Panc1 (cell line): ENCODE measurements at regions of chrX and their contacts with region 1.

Region 1: GRCh38 chrX:74343343-74344279 is 39.6 kb downstream of the ZCCHC13 start:
- DNase-seq: peak; percentile 90
- ATAC-seq: peak; percentile 99
- H3K4me3 ChIP-seq: no peak overlapping the region
- H3K27ac ChIP-seq: peak overlapping the region; percentile 87
- H3K4me1 ChIP-seq: peaks cover 14% of the 10 kb centered on the region
- H3K27me3 ChIP-seq: no peaks in the 10 kb centered on the region
- CTCF ChIP-seq: peak; percentile 81

Region 2: DNA sequence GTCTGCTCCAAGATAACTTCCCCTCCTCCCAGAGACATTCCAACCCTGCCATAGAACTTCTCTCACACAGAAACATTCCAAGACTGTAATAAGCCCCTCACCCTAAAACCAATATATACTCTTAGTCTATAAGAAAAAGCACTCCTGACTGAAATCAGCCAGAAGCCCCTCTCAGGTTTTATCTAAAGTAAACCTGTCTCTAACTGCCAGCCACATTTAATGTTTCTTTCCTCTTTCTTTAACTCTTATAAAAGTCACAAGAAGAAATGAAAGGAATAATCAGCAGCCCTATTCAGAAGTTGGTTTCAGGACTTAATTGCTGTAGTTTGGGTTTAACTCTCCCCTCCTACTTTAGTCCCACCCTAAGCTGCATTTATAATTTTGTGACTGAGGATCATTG is 204.7 kb before region 1 on chrX:
- CTCF ChIA-PET with region 1: no interaction called
- POLR2A ChIA-PET with region 1: no interaction called
- in situ Hi-C with region 1: no loop called
- intact Hi-C with region 1: no loop called
- DNase-seq: no peak
- ATAC-seq: no peak
- H3K4me3 ChIP-seq: no peak overlapping the region
- H3K27ac ChIP-seq: no peak overlapping the region
- H3K4me1 ChIP-seq: no peaks in the 10 kb centered on the region
- H3K27me3 ChIP-seq: no peaks in the 10 kb centered on the region
- CTCF ChIP-seq: no peak

Region 3: DNA sequence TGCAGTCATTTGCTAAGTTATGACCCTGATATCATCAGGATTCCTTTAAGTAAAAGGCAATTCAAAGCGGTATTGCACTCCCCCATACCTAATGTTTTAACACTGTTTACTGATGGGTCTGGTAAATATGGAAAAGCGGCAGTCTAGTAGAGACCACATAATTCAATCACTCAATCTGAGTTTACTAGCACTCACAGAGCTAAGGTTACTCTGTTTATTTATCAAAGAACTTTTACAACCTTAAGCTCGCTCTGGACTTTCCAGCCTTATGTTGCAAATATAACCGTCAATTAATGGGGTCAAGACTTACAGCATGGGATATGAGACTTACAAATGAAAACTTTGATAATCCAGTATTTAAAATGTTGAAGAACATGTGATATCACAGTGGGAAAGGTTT is 164.1 kb before region 1 on chrX:
- CTCF ChIA-PET with region 1: interaction called, 11 read pairs
- POLR2A ChIA-PET with region 1: no interaction called
- in situ Hi-C with region 1: no loop called
- intact Hi-C with region 1: no loop called
- DNase-seq: no peak
- ATAC-seq: peak; percentile 79
- H3K4me3 ChIP-seq: no peak overlapping the region
- H3K27ac ChIP-seq: peak overlapping the region; percentile 98
- H3K4me1 ChIP-seq: peaks cover 34% of the 10 kb centered on the region
- H3K27me3 ChIP-seq: no peaks in the 10 kb centered on the region
- CTCF ChIP-seq: no peak

Region 4: GRCh38 chrX:74291964-74292807 is 51.4 kb before region 1 on chrX:
- CTCF ChIA-PET with region 1: no interaction called
- POLR2A ChIA-PET with region 1: no interaction called
- in situ Hi-C with region 1: no loop called
- intact Hi-C with region 1: loop called (anchors 2 kb)
- DNase-seq: peak; percentile 72
- ATAC-seq: peak; percentile 92
- H3K4me3 ChIP-seq: peak overlapping the region; percentile 89 to 98
- H3K27ac ChIP-seq: peak overlapping the region; percentile 99
- H3K4me1 ChIP-seq: peaks cover 21% of the 10 kb centered on the region
- H3K27me3 ChIP-seq: no peaks in the 10 kb centered on the region
- CTCF ChIP-seq: peak; percentile 50